Right ventricle myocardium superior (tissue), 1 donor: ENCODE measurements at regions of chr12 and their contacts with region 1.

Region 1: DNA sequence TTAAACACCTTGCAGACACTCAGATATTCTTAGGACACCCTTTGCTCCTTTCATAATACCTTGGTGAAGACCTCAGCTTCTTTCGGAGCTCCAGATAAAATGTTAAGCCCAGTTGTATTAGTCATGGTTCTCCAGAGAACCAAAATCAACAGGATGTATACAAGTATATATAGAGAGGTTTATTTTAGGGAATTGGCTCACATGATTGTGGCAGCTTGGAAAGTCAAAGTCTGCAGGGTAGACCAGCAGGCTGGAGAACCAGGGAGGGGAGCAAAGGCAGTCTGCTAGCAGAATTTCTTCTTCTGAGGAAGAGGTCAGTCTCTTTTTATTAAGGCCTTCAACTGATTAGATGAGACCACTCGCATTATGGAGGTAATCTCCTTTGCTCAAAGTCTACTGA is 6.9 kb upstream of the IGF1 start:
- DNase-seq: no peak
- ATAC-seq: no peak

Region 2: DNA sequence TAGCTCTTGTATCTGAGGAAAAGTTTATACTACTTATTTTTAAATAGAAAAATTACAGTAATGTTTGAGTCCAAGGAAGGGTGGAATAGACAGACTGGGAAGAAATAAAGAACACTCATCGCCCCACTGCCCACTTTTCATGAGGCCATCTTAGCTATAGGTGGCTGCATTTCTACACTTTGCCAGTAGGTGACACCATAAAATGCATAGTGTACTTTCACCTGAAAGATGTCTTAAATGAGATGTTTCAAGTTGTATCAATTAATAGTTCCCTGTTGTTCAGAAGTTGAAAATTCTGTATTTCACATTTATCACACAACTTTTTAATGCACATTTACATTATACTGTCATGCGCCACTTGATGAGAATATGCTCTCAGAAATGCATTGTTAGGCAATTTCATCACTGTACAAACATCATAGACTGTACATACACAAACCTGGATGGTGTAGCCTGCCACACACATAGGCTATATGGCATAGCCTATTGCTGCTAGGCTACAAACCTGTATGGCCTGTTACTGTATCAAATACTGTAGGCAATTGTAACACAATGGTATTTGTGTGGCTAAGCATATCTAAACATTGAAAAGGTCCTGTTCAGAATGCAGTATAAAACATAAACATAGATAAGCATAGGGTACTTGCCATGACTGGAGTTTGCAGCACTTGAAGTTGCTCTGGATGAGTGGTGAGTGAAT is 317.2 kb before region 1 on chr12:
- intact Hi-C with region 1: loop called (anchors 2 kb)
- DNase-seq: no peak
- ATAC-seq: peak; percentile 52

Region 3: GRCh38 chr12:102543494-102544485 is 56.6 kb after region 1 on chr12:
- intact Hi-C with region 1: no loop called
- DNase-seq: no peak
- ATAC-seq: no peak